ENCODE measurements at regions of chr1 and their contacts with region 1.

Region 1: GRCh38 chr1:67853704-67854103 is 20.4 kb upstream of the GNG12 start:
- DNase-seq: no peak
- ATAC-seq: no peak
- H3K4me3 ChIP-seq: no peak overlapping the region
- H3K27ac ChIP-seq: no peak overlapping the region
- H3K4me1 ChIP-seq: peaks cover 8 to 10% of the 10 kb centered on the region in 2 donors
- H3K27me3 ChIP-seq: no peaks in the 10 kb centered on the region
- CTCF ChIP-seq: peak in 3 of 5 experiments; percentile 37 to 38 (median 37)
- POLR2A ChIP-seq: no peak

Region 2: DNA sequence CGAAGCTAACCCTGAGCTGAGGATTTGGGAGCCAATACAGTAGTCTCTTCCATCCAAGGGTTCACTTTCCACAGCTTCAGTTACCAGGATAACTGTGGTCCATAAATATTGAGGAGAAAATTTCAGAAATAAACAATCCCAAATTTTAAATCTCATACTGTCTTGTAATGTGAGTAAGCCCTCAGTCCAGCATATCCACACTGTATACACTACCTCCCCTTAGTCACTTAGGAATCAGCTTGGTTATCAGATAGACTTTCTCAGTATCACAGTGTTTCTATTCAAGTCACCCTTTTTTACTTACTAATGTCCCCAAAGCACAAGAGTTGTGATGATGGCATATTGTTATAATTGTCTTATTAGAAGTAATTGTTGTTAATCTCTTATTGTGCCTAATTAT is 81.9 kb after region 1 on chr1:
- in situ Hi-C with region 1: no loop called
- intact Hi-C with region 1: no loop called
- DNase-seq: no peak
- ATAC-seq: no peak
- H3K4me3 ChIP-seq: no peak overlapping the region
- H3K27ac ChIP-seq: no peak overlapping the region
- H3K4me1 ChIP-seq: no peaks in the 10 kb centered on the region
- H3K27me3 ChIP-seq: no peaks in the 10 kb centered on the region
- CTCF ChIP-seq: no peak
- POLR2A ChIP-seq: no peak

Region 3: GRCh38 chr1:68103884-68104554 is 250.3 kb after region 1 on chr1:
- in situ Hi-C with region 1: loop called in 2 of 4 experiments (anchors 10 kb)
- intact Hi-C with region 1: no loop called
- DNase-seq: no peak
- ATAC-seq: peak; percentile 47 to 77
- H3K4me3 ChIP-seq: no peak overlapping the region
- H3K27ac ChIP-seq: no peak overlapping the region
- H3K4me1 ChIP-seq: no peaks in the 10 kb centered on the region
- H3K27me3 ChIP-seq: no peaks in the 10 kb centered on the region
- CTCF ChIP-seq: no peak
- POLR2A ChIP-seq: no peak

Region 4: DNA sequence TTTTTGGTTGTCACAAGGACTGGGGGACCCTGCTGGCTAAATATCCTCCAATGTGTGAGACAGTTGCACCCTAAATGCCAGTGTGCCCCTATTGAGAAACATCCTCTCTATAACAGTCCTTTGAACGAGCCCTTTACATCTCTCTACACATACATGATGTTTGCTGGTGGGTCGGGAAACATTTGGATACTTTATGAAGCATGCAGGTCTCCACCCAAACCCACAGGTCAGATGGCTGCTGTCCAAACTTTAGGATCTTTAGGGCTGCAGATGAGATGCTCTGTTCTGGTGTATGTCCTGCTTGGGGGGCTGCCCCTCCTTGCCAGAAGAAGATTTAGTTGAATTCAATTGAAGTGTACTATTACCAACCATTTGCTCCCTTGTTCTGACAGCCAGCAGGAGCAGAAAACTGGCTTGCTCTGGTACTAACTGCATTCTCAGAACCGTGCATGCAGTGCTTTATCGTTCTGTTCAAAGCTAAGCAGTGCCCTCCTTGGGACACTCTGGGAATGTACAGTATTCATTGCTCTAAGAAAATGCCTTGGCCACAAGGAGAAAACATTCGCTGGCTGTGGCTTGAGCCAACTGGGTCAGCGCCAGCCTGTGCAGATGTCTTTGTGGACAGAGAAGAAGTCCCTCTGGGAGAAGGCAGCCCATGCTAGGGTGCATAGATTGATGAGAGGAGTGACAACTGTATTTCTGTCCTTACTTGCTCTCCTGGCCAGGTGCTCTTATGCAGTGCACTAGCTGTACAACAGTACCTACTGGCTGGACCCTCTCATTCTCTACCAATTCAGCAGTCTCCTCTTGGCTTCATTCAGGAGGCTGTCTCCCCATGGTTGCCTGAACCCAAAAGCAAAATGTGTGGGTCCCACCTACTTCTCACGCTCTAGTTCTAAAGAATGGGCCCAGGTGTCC is 258.1 kb after region 1 on chr1:
- in situ Hi-C with region 1: loop called in 2 of 4 experiments (anchors 10 kb)
- intact Hi-C with region 1: loop called (anchors 5 kb)
- DNase-seq: peak; percentile 46 to 56
- ATAC-seq: peak; percentile 87 to 88
- H3K4me3 ChIP-seq: no peak overlapping the region
- H3K27ac ChIP-seq: no peak overlapping the region
- H3K4me1 ChIP-seq: peaks cover 9 to 10% of the 10 kb centered on the region in 2 donors
- H3K27me3 ChIP-seq: no peaks in the 10 kb centered on the region
- CTCF ChIP-seq: peak in 3 of 5 experiments; percentile 29 to 47 (median 46)
- POLR2A ChIP-seq: no peak

Region 5: DNA sequence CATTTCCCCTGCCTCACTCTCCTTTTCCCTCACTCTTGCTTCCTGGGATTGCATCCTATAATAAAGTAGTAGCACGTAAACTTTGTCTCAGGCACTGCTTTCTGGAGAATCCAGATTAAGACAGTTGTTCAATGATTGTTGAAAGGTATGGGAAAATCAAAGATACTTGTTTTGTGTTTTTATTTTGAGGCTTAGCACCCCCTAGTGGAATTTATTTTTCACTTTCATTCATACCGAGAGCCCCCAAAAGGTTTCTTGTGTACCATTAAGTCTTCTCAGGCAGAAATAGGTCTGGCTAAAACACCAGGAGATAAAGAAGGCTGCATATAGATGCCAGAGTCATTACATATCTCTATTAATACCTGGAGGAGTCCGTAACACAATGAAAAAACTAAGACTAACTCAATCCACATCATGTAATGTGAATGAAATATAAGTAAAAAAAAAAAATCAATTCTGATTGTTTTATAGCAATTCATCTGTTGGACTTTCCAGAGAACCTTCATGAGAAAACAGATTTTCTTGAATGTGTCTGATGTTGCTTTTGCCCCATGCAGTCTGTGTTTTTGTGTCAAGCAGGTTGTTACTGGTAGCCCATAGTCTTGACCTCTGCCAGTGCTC is 492.6 kb after region 1 on chr1:
- in situ Hi-C with region 1: loop called in 1 of 4 experiments (anchors 25 kb)
- intact Hi-C with region 1: loop called (anchors 10 kb)
- DNase-seq: no peak
- ATAC-seq: no peak
- H3K4me3 ChIP-seq: no peak overlapping the region
- H3K27ac ChIP-seq: no peak overlapping the region
- H3K4me1 ChIP-seq: no peaks in the 10 kb centered on the region
- H3K27me3 ChIP-seq: no peaks in the 10 kb centered on the region
- CTCF ChIP-seq: peak; percentile 11 to 62 (median 33)
- POLR2A ChIP-seq: no peak